Activated CD4-positive, alpha-beta memory T cell treated with anti-CD3 and anti-CD28 coated beads, Interleukin-2, amount 10 ng/mL, durations not matched to agents 7 days and 5 days (primary cell): ENCODE measurements at regions of chr15 and their contacts with region 1.

Region 1: GRCh38 chr15:55196458-55197361 is at the start of gene RSL24D1:
- DNase-seq: peak; percentile 97
- H3K4me3 Mint-ChIP-seq: no peak within 1 kb of the TSS
- H3K27ac Mint-ChIP-seq: no peak within 1 kb of the TSS
- H3K4me1 Mint-ChIP-seq: peaks cover 24% of the 10 kb centered on the region
- H3K27me3 Mint-ChIP-seq: no peaks in the 10 kb centered on the region
- total RNA-seq, gene RSL24D1: 107 to 111 TPM

Region 2: GRCh38 chr15:54998661-54999060 is 198.0 kb before region 1 on chr15:
- CTCF ChIA-PET with region 1: no interaction called
- POLR2A ChIA-PET with region 1: no interaction called
- DNase-seq: no peak
- H3K4me3 Mint-ChIP-seq: no peak overlapping the region
- H3K27ac Mint-ChIP-seq: no peak overlapping the region
- H3K4me1 Mint-ChIP-seq: no peaks in the 10 kb centered on the region
- H3K27me3 Mint-ChIP-seq: no peaks in the 10 kb centered on the region

Region 3: DNA sequence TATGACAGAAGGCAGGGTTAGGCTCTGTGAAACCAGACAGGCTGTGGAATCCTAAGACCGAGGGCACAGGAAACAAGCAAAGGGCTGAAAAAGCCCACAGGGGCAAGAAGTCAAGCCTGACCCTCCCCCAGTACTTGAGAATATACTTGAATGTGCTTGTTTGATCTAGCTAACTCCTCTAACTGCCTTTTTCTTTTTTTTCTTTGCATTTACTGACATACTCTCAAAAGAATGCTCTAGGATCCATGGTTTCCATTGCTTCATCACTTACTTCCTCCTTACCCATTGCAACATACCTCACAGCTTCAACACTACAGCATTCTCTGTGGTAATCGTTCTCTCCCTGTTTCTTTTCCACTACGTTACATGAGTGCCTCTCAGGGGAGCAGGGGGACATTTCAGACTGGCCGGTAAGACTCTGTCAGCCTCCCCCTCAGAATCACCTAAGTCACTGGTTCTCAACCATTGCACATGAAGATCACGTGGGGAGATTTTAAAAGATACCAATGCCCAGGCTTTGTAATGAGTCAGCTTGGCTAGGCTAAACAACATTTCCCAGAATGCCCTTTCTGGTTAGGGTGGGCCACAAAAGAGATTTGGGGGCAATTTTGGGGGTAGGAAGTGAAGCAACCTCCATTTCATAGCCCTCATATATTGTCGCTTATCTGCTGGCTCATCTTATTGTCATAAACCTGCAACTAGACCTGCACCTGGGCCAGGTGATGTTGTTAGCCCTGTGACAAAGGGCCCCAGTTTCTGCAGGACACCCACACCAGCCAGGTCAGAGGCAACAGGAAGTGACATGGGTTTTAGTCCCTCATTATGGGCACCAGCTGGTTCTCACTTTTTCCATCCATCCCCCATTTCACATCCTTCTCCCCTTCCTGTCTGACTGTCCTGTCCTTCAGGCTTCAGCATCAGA is 24.6 kb after region 1 on chr15:
- CTCF ChIA-PET with region 1: interaction called, 21 read pairs
- POLR2A ChIA-PET with region 1: interaction called, 25 read pairs
- DNase-seq: peak; percentile 46
- H3K4me3 Mint-ChIP-seq: peak overlapping the region; percentile 43
- H3K27ac Mint-ChIP-seq: peak overlapping the region; percentile 94
- H3K4me1 Mint-ChIP-seq: peaks cover 84% of the 10 kb centered on the region
- H3K27me3 Mint-ChIP-seq: no peaks in the 10 kb centered on the region

Region 4: GRCh38 chr15:55267401-55268175 is 70.9 kb after region 1 on chr15:
- CTCF ChIA-PET with region 1: interaction called, 3 read pairs
- POLR2A ChIA-PET with region 1: interaction called, 14 read pairs
- DNase-seq: peak; percentile 82
- H3K4me3 Mint-ChIP-seq: peak overlapping the region; percentile 60
- H3K27ac Mint-ChIP-seq: peak overlapping the region; percentile 95
- H3K4me1 Mint-ChIP-seq: peaks cover 77% of the 10 kb centered on the region
- H3K27me3 Mint-ChIP-seq: no peaks in the 10 kb centered on the region

Region 5: DNA sequence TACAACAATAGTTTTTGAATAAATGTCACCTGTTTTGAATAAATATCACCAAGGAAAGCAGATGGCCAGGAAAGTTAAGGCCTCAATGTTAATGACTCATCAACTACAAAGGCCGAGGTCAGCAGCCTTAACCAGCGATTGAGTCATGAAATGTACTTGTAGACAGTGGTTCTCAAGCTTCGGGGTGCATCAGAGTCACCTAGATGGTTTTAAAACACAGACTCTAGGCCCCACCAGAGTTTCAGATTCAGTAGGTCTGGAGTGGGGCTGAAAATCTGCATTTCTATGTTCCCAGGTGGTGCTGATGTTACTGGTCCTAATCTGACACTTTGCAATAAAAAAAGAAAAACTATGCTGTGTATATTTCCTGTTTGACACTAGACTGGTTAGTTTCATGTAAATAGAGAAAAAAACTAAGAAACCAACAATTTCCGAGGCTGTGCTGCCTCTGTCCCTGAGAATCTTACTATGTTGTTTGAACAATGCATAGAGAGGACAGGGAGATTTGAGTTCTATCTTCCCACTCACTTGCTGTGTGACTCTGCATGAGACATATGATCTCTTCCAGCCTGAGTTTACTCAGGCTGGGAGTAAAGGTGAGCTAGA is 83.1 kb after region 1 on chr15:
- CTCF ChIA-PET with region 1: interaction called, 4 read pairs
- POLR2A ChIA-PET with region 1: interaction called, 14 read pairs
- DNase-seq: peak; percentile 68
- H3K4me3 Mint-ChIP-seq: peak overlapping the region; percentile 63
- H3K27ac Mint-ChIP-seq: peak overlapping the region; percentile 91
- H3K4me1 Mint-ChIP-seq: peaks cover 97% of the 10 kb centered on the region
- H3K27me3 Mint-ChIP-seq: no peaks in the 10 kb centered on the region

Region 6: GRCh38 chr15:55290528-55291057 is 93.9 kb after region 1 on chr15:
- CTCF ChIA-PET with region 1: interaction called, 7 read pairs
- POLR2A ChIA-PET with region 1: interaction called, 14 read pairs
- DNase-seq: peak; percentile 86
- H3K4me3 Mint-ChIP-seq: peak overlapping the region; percentile 94
- H3K27ac Mint-ChIP-seq: peak overlapping the region; percentile 86
- H3K4me1 Mint-ChIP-seq: peaks cover 37% of the 10 kb centered on the region
- H3K27me3 Mint-ChIP-seq: no peaks in the 10 kb centered on the region

Region 7: GRCh38 chr15:55318588-55319494 is 122.1 kb after region 1 on chr15 and contains the starts of genes PIGB and PIGBOS1:
- CTCF ChIA-PET with region 1: interaction called, 10 read pairs
- POLR2A ChIA-PET with region 1: interaction called, 28 read pairs
- DNase-seq: peak; percentile 85
- H3K4me3 Mint-ChIP-seq: peak within 1 kb of the TSS; percentile 98
- H3K27ac Mint-ChIP-seq: peak within 1 kb of the TSS; percentile 95
- H3K4me1 Mint-ChIP-seq: peaks cover 56% of the 10 kb centered on the region
- H3K27me3 Mint-ChIP-seq: no peaks in the 10 kb centered on the region
- total RNA-seq, gene PIGB: 28.9 to 29.3 TPM
- total RNA-seq, gene PIGBOS1: 14.7 to 14.9 TPM

Region 8: GRCh38 chr15:55407949-55408791 is 211.5 kb after region 1 on chr15 and contains the starts of genes CCPG1 and PIERCE2:
- CTCF ChIA-PET with region 1: interaction called, 9 read pairs
- POLR2A ChIA-PET with region 1: interaction called, 17 read pairs
- DNase-seq: peak; percentile 92
- H3K4me3 Mint-ChIP-seq: peak within 1 kb of the TSS; percentile 91
- H3K27ac Mint-ChIP-seq: peak within 1 kb of the TSS; percentile 86
- H3K4me1 Mint-ChIP-seq: peaks cover 34% of the 10 kb centered on the region
- H3K27me3 Mint-ChIP-seq: no peaks in the 10 kb centered on the region
- total RNA-seq, gene CCPG1: 33.3 to 33.4 TPM
- total RNA-seq, gene PIERCE2: not detected